OCI-LY7 (cell line): ENCODE measurements at regions of chr7 and their contacts with region 1.

Region 1: DNA sequence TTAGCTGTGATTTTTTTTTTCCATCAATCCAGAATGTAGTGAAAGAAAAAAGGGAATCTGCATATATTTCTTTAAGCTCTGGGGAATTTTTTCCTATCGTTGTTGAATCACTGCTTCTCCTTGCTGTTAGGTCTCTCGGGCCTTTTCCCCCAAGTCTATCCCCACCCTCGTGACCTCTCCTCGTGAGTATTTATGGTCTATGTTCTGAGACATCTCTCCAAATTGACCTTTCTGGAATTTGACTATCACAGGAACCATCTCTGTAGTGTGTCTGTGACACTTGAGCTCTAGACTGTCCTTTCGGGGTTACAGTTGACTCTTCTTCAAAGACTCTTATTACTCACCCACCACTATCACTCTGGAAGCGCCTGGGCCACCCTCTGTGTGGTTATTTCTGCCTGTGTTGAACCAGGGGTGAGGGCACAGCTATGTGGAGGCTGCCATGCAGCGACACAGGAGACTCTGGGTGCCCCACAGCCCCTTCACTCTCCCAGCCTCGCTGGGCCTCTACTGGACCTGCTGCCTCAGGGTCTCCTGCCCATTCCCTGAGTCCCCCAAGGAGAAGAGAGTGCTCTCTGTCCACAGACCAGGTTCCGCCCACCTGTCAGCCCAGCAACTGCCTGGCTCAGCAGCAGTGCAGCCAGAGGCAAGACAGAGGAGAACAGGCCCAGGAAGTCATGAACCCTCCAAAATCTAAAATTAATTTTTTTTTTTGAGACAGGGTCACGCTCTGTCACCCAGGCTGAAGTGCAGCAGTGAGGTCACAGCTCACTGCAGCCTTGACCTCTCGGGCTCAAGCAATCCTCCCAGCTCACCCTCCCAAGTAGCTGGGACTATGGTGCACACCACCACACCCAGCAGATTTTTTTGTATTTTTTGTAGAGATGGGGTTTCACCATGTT is 45.7 kb upstream of the PTPRN2 start:
- DNase-seq: peak; percentile 69
- H3K4me3 ChIP-seq: peak overlapping the region; percentile 41
- H3K27ac ChIP-seq: peak overlapping the region; percentile 72
- H3K4me1 ChIP-seq: peaks cover 31% of the 10 kb centered on the region
- CTCF ChIP-seq: no peak

Region 2: GRCh38 chr7:158387546-158387891 is 245.8 kb before region 1 on chr7:
- CTCF ChIA-PET with region 1: no interaction called
- POLR2A ChIA-PET with region 1: no interaction called
- intact Hi-C with region 1: no loop called
- DNase-seq: no peak
- H3K4me3 ChIP-seq: no peak overlapping the region
- H3K27ac ChIP-seq: no peak overlapping the region
- H3K4me1 ChIP-seq: no peaks in the 10 kb centered on the region
- CTCF ChIP-seq: no peak

Region 3: DNA sequence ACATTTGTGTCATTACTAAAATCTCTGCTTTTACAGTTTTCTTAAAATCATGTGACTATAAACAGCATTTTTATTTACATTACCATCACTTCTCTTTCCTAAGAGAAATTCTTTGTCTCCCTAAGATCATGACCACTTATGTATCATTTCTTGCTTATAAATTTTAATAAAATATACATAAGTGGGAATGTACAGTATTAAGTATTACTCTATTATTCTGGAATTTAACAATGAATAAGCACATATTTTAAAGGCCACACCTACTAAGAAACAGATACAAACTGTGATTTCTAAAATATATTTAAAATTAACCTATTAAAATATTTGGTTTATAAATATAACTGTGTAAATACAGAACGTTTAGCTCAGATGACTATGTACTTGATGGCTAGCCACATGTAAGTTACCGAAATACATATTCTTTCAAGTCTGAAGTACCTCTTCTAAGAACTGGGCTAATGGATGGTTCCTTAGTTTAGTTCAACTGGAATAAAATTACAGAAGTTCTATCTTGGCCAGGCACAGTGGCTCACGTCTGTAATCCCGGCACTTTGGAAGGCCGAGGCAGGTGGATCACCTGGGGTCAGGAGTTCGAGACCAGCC is 12.4 kb before region 1 on chr7:
- CTCF ChIA-PET with region 1: no interaction called
- POLR2A ChIA-PET with region 1: interaction called, 14 read pairs
- intact Hi-C with region 1: no loop called
- DNase-seq: no peak
- H3K4me3 ChIP-seq: no peak overlapping the region
- H3K27ac ChIP-seq: no peak overlapping the region
- H3K4me1 ChIP-seq: no peaks in the 10 kb centered on the region
- CTCF ChIP-seq: no peak